Ascending aorta (tissue), 2 donors: ENCODE measurements at regions of chr11 and their contacts with region 1.

Region 1: DNA sequence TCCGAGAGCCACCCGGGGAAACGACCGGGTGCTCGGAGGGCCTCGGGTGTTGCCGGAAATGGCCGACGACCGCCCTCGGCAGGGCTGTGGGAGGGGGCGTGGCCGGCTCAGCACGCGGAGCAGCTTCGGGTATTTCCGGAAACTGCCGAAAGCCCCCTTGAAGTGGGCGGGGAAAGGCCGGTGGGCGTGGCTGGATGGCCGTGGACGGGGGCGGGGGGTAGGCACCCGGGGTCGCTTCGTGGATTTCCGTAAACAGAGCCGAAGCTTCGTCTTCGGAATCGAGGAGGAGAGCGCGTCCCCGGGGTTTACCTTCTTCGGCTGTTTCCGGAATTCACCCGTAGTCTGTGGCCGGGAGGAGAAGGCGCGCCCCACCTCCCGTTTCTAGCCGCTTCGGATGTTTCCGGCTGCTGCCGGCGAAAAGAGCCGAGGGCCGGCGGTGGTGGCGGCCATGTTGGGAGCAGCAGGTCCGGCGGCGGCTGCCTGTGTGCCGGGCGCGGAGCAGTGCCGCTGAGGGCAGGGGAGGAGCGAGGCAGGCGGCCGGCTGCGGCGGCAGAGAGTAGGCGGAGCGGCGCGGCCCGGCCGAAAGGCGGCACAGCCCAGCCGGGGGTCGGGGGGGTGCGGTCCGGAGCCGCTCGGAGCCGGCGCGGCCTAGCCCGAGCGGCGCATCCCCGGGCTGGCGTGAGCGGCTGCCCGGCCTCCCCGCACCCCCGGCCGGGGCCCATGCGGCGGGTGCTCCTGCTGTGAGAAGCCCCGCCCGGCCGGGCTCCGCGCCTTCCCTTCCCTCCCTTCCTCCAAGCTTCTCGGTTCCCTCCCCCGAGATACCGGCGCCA is at the start of gene MARK2:
- DNase-seq: peak; percentile 83 to 99
- H3K4me3 ChIP-seq: peak within 1 kb of the TSS; percentile 93 to 96
- H3K27ac ChIP-seq: peak within 1 kb of the TSS; percentile 81 to 83
- H3K4me1 ChIP-seq: peaks cover 7 to 38% of the 10 kb centered on the region in 2 donors
- H3K27me3 ChIP-seq: no peaks in the 10 kb centered on the region
- CTCF ChIP-seq: no peak
- total RNA-seq, gene MARK2: 45.7 TPM

Region 2: GRCh38 chr11:63629426-63629825 is 209.5 kb before region 1 on chr11:
- intact Hi-C with region 1: no loop called
- DNase-seq: no peak
- H3K4me3 ChIP-seq: no peak overlapping the region
- H3K27ac ChIP-seq: no peak overlapping the region
- H3K4me1 ChIP-seq: no peaks in the 10 kb centered on the region
- H3K27me3 ChIP-seq: no peaks in the 10 kb centered on the region
- CTCF ChIP-seq: no peak

Region 3: GRCh38 chr11:63768237-63769043 is 70.5 kb before region 1 on chr11 and contains the start of gene ZFTA:
- intact Hi-C with region 1: loop called (anchors 2 kb)
- DNase-seq: peak in 1 of 2 donors; percentile 80
- H3K4me3 ChIP-seq: peak within 1 kb of the TSS; percentile 96 to 98
- H3K27ac ChIP-seq: peak within 1 kb of the TSS; percentile 73 to 89
- H3K4me1 ChIP-seq: peaks cover 6 to 7% of the 10 kb centered on the region in 2 donors
- H3K27me3 ChIP-seq: no peaks in the 10 kb centered on the region
- CTCF ChIP-seq: peak in 2 of 3 experiments; percentile 8 to 94
- total RNA-seq, gene ZFTA: 34.7 TPM

Region 4: GRCh38 chr11:63871962-63872799 is 33.3 kb after region 1 on chr11:
- intact Hi-C with region 1: loop called (anchors 1 kb)
- DNase-seq: peak; percentile 72 to 95
- H3K4me3 ChIP-seq: peak overlapping the region in 1 of 2 donors; percentile 1
- H3K27ac ChIP-seq: peak overlapping the region; percentile 38 to 48
- H3K4me1 ChIP-seq: peaks cover 20 to 54% of the 10 kb centered on the region in 2 donors
- H3K27me3 ChIP-seq: no peaks in the 10 kb centered on the region
- CTCF ChIP-seq: peak; percentile 44 to 61 (median 50)

Region 5: GRCh38 chr11:63916837-63917691 is 78.2 kb after region 1 on chr11 and contains the start of gene RCOR2:
- intact Hi-C with region 1: loop called (anchors 1 kb)
- DNase-seq: peak in 1 of 2 donors; percentile 85
- H3K4me3 ChIP-seq: peak within 1 kb of the TSS; percentile 63 to 67
- H3K27ac ChIP-seq: peak within 1 kb of the TSS; percentile 90 to 92
- H3K4me1 ChIP-seq: peaks cover 23 to 41% of the 10 kb centered on the region in 2 donors
- H3K27me3 ChIP-seq: no peaks in the 10 kb centered on the region
- CTCF ChIP-seq: no peak
- total RNA-seq, gene RCOR2: not detected

Region 6: DNA sequence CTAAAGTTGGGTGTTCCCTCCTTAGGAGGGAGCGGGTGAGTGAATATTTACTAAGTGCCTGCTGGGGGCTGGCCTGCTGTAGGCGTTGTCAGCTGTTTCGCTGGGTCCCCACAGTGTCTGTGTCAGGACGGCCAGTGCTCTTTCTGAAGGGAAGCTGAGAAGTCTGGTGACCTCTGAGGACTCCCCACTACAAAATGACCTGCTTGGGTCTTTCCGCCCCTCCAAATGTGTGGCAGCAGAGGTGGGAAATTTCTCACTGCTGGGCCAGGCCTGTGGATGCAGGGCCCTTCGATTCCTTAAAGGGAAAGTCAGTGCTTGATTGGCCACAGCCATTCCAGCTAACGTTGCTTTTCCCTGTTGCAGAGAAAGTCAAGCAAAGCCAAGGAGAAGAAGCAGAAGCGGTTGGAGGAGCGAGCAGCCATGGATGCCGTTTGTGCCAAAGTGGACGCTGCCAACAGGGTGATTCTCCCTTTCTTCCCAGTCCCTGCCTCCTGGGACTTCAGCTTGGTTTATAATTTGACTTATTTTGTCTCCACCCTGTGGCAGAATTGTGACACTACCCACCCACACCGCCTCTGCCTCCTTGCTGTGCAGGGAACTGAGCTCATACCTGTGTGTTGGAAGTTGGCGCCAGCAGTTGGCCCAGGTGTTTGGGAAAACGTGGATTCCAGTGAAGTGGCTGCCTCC is 106.7 kb after region 1 on chr11:
- intact Hi-C with region 1: loop called (anchors 1 kb)
- DNase-seq: peak in 1 of 2 donors; percentile 86
- H3K4me3 ChIP-seq: peak overlapping the region; percentile 27 to 33
- H3K27ac ChIP-seq: peak overlapping the region; percentile 64 to 75
- H3K4me1 ChIP-seq: peaks cover 3 to 9% of the 10 kb centered on the region in 2 donors
- H3K27me3 ChIP-seq: no peaks in the 10 kb centered on the region
- CTCF ChIP-seq: peak; percentile 75 to 84 (median 81)